Activated CD8-positive, alpha-beta T cell treated with anti-CD3 and anti-CD28 coated beads for 36 hours (primary cell): ENCODE measurements at regions of chr3 and their contacts with region 1.

Region 1: DNA sequence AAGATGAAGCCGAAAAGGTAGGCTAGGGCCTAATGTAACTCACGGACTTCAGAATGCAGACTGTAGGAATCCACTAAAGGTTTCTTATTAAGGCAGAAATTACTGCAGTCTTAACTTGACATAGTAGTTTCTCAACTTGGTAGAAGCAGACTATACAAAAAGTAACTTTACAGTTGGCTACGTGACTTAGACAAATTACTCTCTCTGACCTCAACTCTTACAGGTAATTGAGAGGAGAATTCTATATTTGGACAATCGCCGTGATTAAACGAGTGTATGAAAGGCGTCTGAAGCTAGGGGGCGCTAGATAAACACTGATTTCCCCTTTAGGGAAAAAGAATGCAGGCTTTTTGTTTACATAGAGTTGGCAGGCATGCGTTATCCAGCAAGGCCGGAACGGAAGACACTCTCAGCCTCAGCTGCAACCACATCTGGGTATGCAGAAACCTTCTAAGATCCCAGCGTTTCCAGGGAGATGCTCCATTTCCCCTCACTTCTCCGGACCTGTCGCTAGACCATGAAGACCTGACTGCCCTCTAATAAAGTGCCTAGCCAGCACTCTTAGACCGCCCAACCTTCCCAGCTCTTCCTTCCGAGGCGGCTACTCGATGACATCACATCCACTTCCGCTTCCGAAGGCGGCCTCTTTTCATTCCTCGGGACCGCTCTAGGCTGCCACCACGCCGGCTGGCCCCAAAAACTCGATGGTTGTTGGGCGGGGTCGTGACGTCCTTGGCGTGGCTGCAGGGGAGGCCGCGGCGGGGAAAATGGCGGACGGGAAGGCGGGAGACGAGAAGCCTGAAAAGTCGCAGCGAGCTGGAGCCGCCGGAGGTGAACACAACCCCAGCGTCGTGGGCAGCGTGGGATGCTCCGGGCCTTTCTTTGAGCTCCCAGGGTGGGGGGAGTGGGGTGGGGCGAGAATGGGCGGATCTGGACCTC is at the start of gene PCNP:
- DNase-seq: peak; percentile 100
- ATAC-seq: peak; percentile 81
- H3K4me3 Mint-ChIP-seq: peak within 1 kb of the TSS; percentile 95
- H3K27ac Mint-ChIP-seq: peak within 1 kb of the TSS; percentile 98
- H3K4me1 Mint-ChIP-seq: peaks cover 62% of the 10 kb centered on the region
- H3K27me3 Mint-ChIP-seq: no peaks in the 10 kb centered on the region
- CTCF ChIP-seq: peak; percentile 82
- total RNA-seq, gene PCNP: 176 to 197 TPM

Region 2: DNA sequence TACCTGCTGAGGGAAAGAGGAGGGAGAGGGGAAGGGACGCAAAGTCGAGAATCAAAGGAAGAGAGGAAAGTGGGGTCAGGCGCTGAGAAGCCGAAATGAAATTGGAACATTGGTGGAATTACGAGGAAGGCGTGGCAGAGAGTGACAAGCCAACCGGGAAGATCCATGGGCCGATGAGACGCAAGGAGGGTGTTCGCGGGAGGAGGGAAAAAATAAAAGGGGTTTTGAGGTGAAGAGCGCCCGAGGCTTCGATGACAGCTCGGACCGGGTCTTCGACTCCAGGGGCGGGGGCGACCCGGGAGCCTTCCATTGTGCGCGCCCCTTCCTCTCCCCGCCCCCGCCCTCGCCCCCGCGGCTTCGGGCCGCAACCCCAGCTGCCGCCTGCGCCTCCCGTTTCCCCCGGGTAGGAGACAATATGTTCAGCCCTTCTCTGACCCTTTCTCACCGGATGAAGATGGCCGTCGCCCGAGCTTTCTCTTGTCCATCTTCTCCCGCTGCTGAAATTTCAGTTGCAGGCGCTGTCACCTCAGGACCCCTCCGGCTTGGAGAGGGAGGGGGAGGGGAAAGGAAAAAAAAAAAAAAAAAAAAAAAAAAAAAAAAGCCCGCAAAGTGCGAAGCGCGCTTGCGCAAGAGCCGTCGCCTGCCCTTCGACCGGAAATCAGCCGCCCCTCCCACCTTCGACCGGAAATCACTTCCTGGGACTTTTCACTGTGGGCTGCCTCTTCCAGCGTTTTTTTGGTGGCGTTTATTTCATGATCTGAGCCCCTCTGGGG is 60.9 kb before region 1 on chr3 and contains the start of gene SENP7:
- CTCF ChIA-PET with region 1: interaction called, 4 read pairs
- POLR2A ChIA-PET with region 1: interaction called, 19 read pairs
- intact Hi-C with region 1: loop called (anchors 5 kb)
- DNase-seq: peak; percentile 85
- ATAC-seq: peak; percentile 65
- H3K4me3 Mint-ChIP-seq: peak within 1 kb of the TSS; percentile 100
- H3K27ac Mint-ChIP-seq: peak within 1 kb of the TSS; percentile 99
- H3K4me1 Mint-ChIP-seq: peaks cover 31% of the 10 kb centered on the region
- H3K27me3 Mint-ChIP-seq: no peaks in the 10 kb centered on the region
- CTCF ChIP-seq: no peak
- total RNA-seq, gene SENP7: 9.6 to 11.4 TPM

Region 3: DNA sequence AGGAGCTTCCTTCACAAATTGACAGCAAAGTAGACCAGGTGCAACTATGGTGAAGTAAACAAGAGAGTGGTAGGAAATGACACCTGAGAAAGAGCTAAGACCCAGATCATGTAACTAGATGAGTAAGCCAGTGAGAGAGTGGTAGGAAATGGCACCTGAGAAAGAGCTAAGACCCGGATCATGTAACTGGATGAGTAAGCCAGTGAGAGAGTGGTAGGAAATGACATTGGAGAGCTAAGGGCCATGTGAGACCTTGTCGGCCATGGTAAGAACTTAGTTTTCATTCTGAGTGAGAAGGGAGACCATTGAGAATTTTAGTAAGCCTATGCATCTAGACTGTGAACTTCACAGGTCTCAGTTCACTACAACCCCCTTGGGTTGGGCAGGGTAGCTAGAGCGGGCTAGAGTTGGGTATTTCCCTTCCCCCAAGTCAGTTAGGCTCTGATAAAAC is 55.3 kb before region 1 on chr3:
- CTCF ChIA-PET with region 1: interaction called, 8 read pairs
- POLR2A ChIA-PET with region 1: interaction called, 19 read pairs
- intact Hi-C with region 1: loop called (anchors 5 kb)
- DNase-seq: peak; percentile 67
- ATAC-seq: peak; percentile 95
- H3K4me3 Mint-ChIP-seq: peak overlapping the region; percentile 73
- H3K27ac Mint-ChIP-seq: peak overlapping the region; percentile 96
- H3K4me1 Mint-ChIP-seq: peaks cover 47% of the 10 kb centered on the region
- H3K27me3 Mint-ChIP-seq: no peaks in the 10 kb centered on the region
- CTCF ChIP-seq: no peak

Region 4: DNA sequence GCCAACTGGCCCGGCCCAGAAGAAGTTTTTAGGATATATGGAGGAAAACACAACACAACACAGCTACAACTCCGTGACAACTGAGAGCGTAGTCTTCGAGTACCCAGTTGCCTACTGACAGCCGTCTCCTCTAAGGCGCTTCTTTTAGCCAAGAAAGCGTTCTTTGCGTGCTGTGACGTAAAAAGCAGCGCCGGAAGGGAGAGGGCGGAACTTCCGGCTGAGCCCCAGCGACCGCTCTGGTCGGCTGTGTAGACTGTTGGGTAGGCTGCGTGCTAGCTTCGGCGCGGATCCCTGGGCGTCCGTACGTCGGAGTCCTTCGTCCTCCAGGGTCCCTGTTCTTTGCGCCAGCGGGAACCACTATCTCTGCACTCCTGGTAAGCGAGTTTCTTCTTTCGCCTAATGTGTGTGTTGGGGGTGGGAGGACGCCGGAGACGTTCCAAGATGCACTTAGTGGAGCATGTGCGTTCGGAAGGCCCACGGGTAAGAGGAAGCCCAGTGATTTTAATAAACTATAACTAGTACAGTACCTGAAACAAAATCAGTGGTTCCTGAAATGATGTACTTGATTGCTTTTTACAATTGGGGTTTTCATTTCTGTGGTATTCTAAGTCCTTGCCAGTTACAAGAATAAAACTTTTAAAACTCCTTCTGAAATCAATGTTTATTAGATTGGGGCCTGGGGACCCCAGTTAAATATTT is 11.9 kb before region 1 on chr3 and contains the start of gene TRMT10C:
- CTCF ChIA-PET with region 1: interaction called, 15 read pairs
- POLR2A ChIA-PET with region 1: interaction called, 32 read pairs
- intact Hi-C with region 1: no loop called
- DNase-seq: peak; percentile 95
- ATAC-seq: peak; percentile 98
- H3K4me3 Mint-ChIP-seq: peak within 1 kb of the TSS; percentile 98
- H3K27ac Mint-ChIP-seq: peak within 1 kb of the TSS; percentile 98
- H3K4me1 Mint-ChIP-seq: peaks cover 42% of the 10 kb centered on the region
- H3K27me3 Mint-ChIP-seq: no peaks in the 10 kb centered on the region
- CTCF ChIP-seq: no peak
- total RNA-seq, gene TRMT10C: 45.8 to 49.4 TPM

Region 5: GRCh38 chr3:101638261-101638745 is 64.6 kb after region 1 on chr3:
- CTCF ChIA-PET with region 1: interaction called, 12 read pairs
- POLR2A ChIA-PET with region 1: interaction called, 4 read pairs
- intact Hi-C with region 1: loop called (anchors 5 kb)
- DNase-seq: no peak
- ATAC-seq: no peak
- H3K4me3 Mint-ChIP-seq: no peak overlapping the region
- H3K27ac Mint-ChIP-seq: no peak overlapping the region
- H3K4me1 Mint-ChIP-seq: peaks cover 8% of the 10 kb centered on the region
- H3K27me3 Mint-ChIP-seq: no peaks in the 10 kb centered on the region
- CTCF ChIP-seq: no peak

Region 6: GRCh38 chr3:101643861-101644613 is 70.3 kb after region 1 on chr3:
- CTCF ChIA-PET with region 1: interaction called, 12 read pairs
- POLR2A ChIA-PET with region 1: interaction called, 4 read pairs
- intact Hi-C with region 1: loop called (anchors 5 kb)
- DNase-seq: peak; percentile 85
- ATAC-seq: peak; percentile 94
- H3K4me3 Mint-ChIP-seq: no peak overlapping the region
- H3K27ac Mint-ChIP-seq: peak overlapping the region; percentile 87
- H3K4me1 Mint-ChIP-seq: peaks cover 31% of the 10 kb centered on the region
- H3K27me3 Mint-ChIP-seq: no peaks in the 10 kb centered on the region
- CTCF ChIP-seq: no peak

Region 7: DNA sequence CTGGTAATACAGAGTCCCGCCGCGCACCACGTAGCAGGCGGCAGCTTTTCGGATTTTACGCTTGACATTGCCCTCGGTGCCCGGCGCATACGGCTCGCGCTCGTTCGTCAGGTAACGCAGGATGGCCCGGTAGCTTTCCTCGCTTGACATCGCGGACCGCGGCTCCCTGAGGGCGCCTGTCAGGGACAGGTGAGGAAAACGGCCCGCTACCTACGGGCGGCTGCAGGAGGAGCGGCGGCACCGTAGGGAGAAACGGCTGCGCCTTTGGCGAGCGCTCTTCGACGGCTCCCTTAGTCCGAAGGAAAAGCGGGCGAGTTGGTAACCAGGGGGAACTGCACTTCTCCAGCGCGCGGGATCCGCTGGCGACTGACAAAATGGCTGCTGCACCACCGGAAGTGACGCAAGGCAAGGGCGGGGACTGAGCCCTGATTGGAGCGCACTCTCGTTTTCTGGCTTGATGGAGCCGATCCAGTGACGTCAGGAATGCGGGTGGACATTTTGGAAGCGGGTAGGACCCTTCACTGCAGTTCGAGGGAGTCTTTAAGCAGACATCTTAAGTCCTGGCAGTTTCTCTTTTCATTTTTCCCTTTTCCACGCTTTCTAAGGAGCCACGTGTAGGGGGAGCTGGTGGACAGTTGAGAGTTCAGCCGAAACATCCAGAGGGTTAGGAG is 103.2 kb after region 1 on chr3 and contains the start of gene ZBTB11:
- CTCF ChIA-PET with region 1: interaction called, 6 read pairs
- POLR2A ChIA-PET with region 1: interaction called, 27 read pairs
- intact Hi-C with region 1: loop called (anchors 2 kb)
- DNase-seq: peak; percentile 100
- ATAC-seq: peak; percentile 71
- H3K4me3 Mint-ChIP-seq: peak within 1 kb of the TSS; percentile 92
- H3K27ac Mint-ChIP-seq: peak within 1 kb of the TSS; percentile 93
- H3K4me1 Mint-ChIP-seq: peaks cover 48% of the 10 kb centered on the region
- H3K27me3 Mint-ChIP-seq: no peaks in the 10 kb centered on the region
- CTCF ChIP-seq: no peak
- total RNA-seq, gene ZBTB11: 28.5 to 29.6 TPM